Activated CD4-positive, alpha-beta memory T cell treated with anti-CD3 and anti-CD28 coated beads, Interleukin-2, amount 10 ng/mL, durations not matched to agents 7 days and 5 days (primary cell): ENCODE measurements at regions of chr12 and their contacts with region 1.

Region 1: DNA sequence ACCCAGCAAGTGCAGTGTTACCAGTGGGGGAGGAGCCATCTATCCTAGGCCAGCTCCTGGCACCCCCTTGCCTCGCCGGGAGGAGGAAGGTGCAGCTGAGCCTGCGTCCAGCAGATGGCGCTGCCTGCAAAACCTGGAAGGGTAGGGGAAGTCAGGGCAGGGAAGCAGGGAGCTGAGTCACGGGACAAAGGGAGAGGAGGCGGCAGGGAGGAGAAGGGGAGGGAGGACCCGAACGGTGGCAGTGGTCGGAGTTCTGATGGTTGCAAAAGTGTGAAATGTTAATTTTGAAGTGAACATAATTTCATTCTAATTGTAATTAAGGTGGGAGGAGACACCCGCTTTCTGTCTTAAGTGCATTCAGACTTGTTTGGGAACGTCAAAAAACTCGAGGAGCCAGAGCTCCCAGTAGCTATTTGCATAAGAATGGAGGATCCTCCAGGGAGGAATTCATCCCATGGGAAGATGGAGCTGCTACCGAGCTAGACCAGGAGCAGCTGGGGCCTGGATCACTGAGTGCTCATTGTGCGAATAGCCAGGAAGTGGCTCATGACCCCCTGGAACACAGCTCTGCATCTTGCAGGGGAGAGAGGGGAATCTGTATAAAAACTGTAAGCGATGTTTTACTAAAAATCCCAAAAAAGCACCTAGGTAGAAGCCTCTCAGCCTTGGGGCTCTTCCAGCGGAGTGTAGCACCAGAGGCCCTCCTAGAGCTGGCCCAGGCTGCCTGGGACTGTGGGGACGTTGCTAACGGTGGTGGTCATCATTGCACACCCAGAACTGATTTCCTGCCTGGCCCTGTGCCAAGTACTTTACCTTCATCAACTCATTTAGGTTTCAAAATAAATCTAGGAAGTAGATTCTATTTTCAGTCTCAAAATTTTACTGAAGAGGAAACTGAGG is 59.5 kb downstream of the EMP1 start:
- DNase-seq: peak; percentile 79
- H3K4me3 Mint-ChIP-seq: no peak overlapping the region
- H3K27ac Mint-ChIP-seq: no peak overlapping the region
- H3K4me1 Mint-ChIP-seq: peaks cover 3% of the 10 kb centered on the region
- H3K27me3 Mint-ChIP-seq: peaks cover 10% of the 10 kb centered on the region

Region 2: DNA sequence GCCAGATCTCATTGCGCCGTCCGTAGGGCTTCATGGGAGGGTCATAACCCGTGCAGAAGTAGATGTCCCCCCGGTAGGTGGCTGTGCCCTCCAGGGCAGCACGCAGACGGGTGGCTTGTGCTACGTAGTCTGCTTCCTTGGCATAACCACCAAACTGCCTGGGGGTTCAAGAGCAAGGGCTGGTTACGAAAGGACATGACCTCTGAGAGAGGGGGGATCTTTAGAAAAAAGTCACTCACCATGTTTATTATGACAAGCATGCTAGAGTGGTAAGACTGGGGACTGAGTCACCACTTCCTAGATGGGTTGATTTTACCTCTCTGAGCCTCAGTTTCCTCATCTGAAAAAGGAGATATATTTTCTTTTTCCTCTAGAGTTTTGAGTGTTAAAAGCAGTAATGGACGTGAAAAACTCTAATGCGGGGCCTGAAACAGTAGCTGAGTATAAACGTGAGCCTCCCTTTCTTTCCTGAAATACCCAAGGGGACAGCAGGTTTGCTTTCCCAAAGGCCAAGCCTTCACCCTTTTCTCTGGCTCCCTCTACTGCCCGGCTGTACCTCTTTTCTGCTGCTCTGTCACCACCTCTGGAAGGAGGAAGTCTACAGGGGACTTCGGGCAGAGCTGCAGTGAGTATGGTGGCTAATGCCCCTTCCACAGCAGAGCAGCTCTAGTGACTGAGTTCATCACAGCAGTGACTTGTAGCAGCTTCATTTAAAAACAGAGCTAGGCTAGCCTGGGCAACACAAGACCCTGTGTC is 280.5 kb before region 1 on chr12:
- CTCF ChIA-PET with region 1: no interaction called
- POLR2A ChIA-PET with region 1: no interaction called
- DNase-seq: no peak
- H3K4me3 Mint-ChIP-seq: no peak overlapping the region
- H3K27ac Mint-ChIP-seq: no peak overlapping the region
- H3K4me1 Mint-ChIP-seq: no peaks in the 10 kb centered on the region
- H3K27me3 Mint-ChIP-seq: no peaks in the 10 kb centered on the region

Region 3: DNA sequence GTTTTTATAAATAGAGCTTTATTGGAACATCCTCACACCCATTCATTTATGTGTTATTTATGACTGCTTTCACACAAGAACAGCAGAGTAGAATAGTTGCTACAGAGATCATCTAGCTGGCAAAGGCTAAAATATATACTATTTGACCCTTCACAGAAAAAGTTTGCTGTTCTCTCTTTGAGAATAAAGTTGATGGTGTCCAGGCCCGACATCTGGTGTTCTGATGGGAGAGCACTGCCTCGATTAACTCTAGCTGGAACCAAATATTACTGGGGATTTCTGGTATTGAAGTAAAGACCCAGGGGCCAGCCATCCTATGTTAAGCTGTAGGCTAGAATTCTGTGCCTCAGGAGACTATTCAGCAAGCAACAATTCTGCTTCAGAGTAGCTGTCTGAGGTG is 190.0 kb before region 1 on chr12:
- CTCF ChIA-PET with region 1: interaction called, 10 read pairs
- POLR2A ChIA-PET with region 1: no interaction called
- DNase-seq: no peak
- H3K4me3 Mint-ChIP-seq: no peak overlapping the region
- H3K27ac Mint-ChIP-seq: no peak overlapping the region
- H3K4me1 Mint-ChIP-seq: peaks cover 8% of the 10 kb centered on the region
- H3K27me3 Mint-ChIP-seq: no peaks in the 10 kb centered on the region

Region 4: DNA sequence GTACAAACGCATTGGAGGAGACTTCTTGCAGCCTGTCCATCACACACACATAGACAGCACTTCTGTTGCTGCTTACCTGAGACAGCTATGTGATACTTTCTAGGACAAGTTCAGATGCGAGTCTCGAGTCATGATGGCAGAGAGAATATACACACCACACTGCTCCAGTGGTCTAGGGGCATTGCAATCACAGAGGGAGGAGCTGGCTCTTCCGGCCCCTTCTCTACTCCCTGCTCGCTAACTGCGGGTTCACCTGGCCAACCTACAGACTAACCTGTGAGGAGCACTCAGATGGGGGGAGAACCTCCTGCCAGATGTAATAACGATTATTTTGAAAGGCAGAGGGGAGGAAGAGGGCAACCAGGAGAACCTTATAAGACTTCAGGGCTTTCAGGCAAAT is 28.9 kb before region 1 on chr12:
- CTCF ChIA-PET with region 1: interaction called, 10 read pairs
- POLR2A ChIA-PET with region 1: no interaction called
- DNase-seq: no peak
- H3K4me3 Mint-ChIP-seq: no peak overlapping the region
- H3K27ac Mint-ChIP-seq: no peak overlapping the region
- H3K4me1 Mint-ChIP-seq: peaks cover 2% of the 10 kb centered on the region
- H3K27me3 Mint-ChIP-seq: peaks cover 47% of the 10 kb centered on the region

Region 5: GRCh38 chr12:13270817-13271216 is 14.8 kb after region 1 on chr12:
- CTCF ChIA-PET with region 1: interaction called, 27 read pairs
- POLR2A ChIA-PET with region 1: no interaction called
- DNase-seq: no peak
- H3K4me3 Mint-ChIP-seq: no peak overlapping the region
- H3K27ac Mint-ChIP-seq: no peak overlapping the region
- H3K4me1 Mint-ChIP-seq: no peaks in the 10 kb centered on the region
- H3K27me3 Mint-ChIP-seq: peaks cover 28% of the 10 kb centered on the region

Region 6: GRCh38 chr12:13362260-13362841 is 106.3 kb after region 1 on chr12:
- CTCF ChIA-PET with region 1: interaction called, 13 read pairs
- POLR2A ChIA-PET with region 1: no interaction called
- DNase-seq: peak; percentile 52
- H3K4me3 Mint-ChIP-seq: no peak overlapping the region
- H3K27ac Mint-ChIP-seq: no peak overlapping the region
- H3K4me1 Mint-ChIP-seq: no peaks in the 10 kb centered on the region
- H3K27me3 Mint-ChIP-seq: peaks cover 35% of the 10 kb centered on the region